Natural killer cell (primary cell): ENCODE measurements at regions of chr13 and their contacts with region 1.

Region 1: GRCh38 chr13:48233046-48233907 is at the start of gene ITM2B:
- DNase-seq: peak; percentile 62 to 86
- ATAC-seq: peak; percentile 62 to 83 (median 73)
- H3K4me3 ChIP-seq: peak within 1 kb of the TSS; percentile 96
- H3K4me3 Mint-ChIP-seq: peak within 1 kb of the TSS; percentile 94
- H3K27ac ChIP-seq: peak within 1 kb of the TSS; percentile 97
- H3K27ac Mint-ChIP-seq: peak within 1 kb of the TSS; percentile 92 to 94
- H3K4me1 ChIP-seq: peaks cover 15% of the 10 kb centered on the region
- H3K4me1 Mint-ChIP-seq: peaks cover 47 to 51% of the 10 kb centered on the region in 2 donors
- H3K27me3 ChIP-seq: no peaks in the 10 kb centered on the region
- H3K27me3 Mint-ChIP-seq: peaks cover 0 to 2% of the 10 kb centered on the region in 2 donors
- CTCF ChIP-seq: peak; percentile 39
- total RNA-seq, gene ITM2B: 305 to 387 (median 309) TPM

Region 2: DNA sequence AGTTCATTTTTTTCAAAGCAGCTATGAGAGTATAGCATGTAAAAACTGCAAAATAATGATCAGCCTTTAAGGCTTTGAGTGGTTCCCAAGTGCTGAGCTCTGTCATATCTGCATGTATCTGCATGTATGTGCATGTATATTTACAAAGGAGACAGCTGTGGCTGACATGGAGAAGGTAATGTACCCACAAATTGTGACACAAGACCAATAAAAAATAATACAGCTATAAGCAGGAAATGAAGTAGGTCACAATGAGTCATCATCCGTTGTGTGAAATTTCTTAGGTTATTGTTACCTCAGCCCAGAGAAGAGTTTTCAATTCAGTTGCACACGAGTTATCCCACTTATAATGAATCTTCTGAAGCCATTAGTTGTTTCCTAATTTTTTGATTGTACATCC is 77.4 kb before region 1 on chr13:
- intact Hi-C with region 1: loop called (anchors 2 kb)
- DNase-seq: peak in 1 of 2 donors; percentile 86
- ATAC-seq: peak; percentile 88 to 94 (median 93)
- H3K4me3 ChIP-seq: no peak overlapping the region
- H3K4me3 Mint-ChIP-seq: peak overlapping the region; percentile 86
- H3K27ac ChIP-seq: peak overlapping the region; percentile 74
- H3K27ac Mint-ChIP-seq: peak overlapping the region; percentile 95 to 97
- H3K4me1 ChIP-seq: peaks cover 39% of the 10 kb centered on the region
- H3K4me1 Mint-ChIP-seq: peaks cover 55 to 62% of the 10 kb centered on the region in 2 donors
- H3K27me3 ChIP-seq: no peaks in the 10 kb centered on the region
- H3K27me3 Mint-ChIP-seq: no peaks in the 10 kb centered on the region
- CTCF ChIP-seq: no peak

Region 3: GRCh38 chr13:48214519-48215121 is 18.7 kb before region 1 on chr13:
- intact Hi-C with region 1: loop called (anchors 2 kb)
- DNase-seq: peak; percentile 50 to 52
- ATAC-seq: peak; percentile 88 to 91 (median 90)
- H3K4me3 ChIP-seq: no peak overlapping the region
- H3K4me3 Mint-ChIP-seq: peak overlapping the region; percentile 59
- H3K27ac ChIP-seq: peak overlapping the region; percentile 24
- H3K27ac Mint-ChIP-seq: peak overlapping the region; percentile 78 to 84
- H3K4me1 ChIP-seq: peaks cover 14% of the 10 kb centered on the region
- H3K4me1 Mint-ChIP-seq: peaks cover 21 to 24% of the 10 kb centered on the region in 2 donors
- H3K27me3 ChIP-seq: no peaks in the 10 kb centered on the region
- H3K27me3 Mint-ChIP-seq: peaks cover 0 to 7% of the 10 kb centered on the region in 2 donors
- CTCF ChIP-seq: no peak

Region 4: DNA sequence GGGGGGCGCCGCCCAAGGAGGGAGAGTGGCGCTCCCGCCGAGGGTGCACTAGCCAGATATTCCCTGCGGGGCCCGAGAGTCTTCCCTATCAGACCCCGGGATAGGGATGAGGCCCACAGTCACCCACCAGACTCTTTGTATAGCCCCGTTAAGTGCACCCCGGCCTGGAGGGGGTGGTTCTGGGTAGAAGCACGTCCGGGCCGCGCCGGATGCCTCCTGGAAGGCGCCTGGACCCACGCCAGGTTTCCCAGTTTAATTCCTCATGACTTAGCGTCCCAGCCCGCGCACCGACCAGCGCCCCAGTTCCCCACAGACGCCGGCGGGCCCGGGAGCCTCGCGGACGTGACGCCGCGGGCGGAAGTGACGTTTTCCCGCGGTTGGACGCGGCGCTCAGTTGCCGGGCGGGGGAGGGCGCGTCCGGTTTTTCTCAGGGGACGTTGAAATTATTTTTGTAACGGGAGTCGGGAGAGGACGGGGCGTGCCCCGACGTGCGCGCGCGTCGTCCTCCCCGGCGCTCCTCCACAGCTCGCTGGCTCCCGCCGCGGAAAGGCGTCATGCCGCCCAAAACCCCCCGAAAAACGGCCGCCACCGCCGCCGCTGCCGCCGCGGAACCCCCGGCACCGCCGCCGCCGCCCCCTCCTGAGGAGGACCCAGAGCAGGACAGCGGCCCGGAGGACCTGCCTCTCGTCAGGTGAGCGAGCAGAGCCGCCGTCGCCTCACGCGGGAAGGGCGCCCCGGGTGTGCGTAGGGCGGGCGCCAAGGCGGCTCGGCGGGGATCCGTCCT is 70.3 kb after region 1 on chr13 and contains the start of gene RB1:
- intact Hi-C with region 1: loop called (anchors 5 kb)
- DNase-seq: peak; percentile 90 to 97
- ATAC-seq: peak; percentile 75 to 89 (median 86)
- H3K4me3 ChIP-seq: peak within 1 kb of the TSS; percentile 92
- H3K4me3 Mint-ChIP-seq: peak within 1 kb of the TSS; percentile 89
- H3K27ac ChIP-seq: peak within 1 kb of the TSS; percentile 97
- H3K27ac Mint-ChIP-seq: peak within 1 kb of the TSS; percentile 97 to 98
- H3K4me1 ChIP-seq: peaks cover 12% of the 10 kb centered on the region
- H3K4me1 Mint-ChIP-seq: peaks cover 26 to 33% of the 10 kb centered on the region in 2 donors
- H3K27me3 ChIP-seq: no peaks in the 10 kb centered on the region
- H3K27me3 Mint-ChIP-seq: no peaks in the 10 kb centered on the region
- CTCF ChIP-seq: no peak
- total RNA-seq, gene RB1: 25.5 to 28.3 (median 26.9) TPM